Gastrocnemius medialis (tissue), 4 donors: ENCODE measurements at regions of chr3 and their contacts with region 1.

Region 1: GRCh38 chr3:172317984-172318383 is 130.3 kb downstream of the GHSR start:
- DNase-seq: peak in 1 of 2 donors; percentile 41
- ATAC-seq: peak; percentile 44 to 48
- H3K4me3 ChIP-seq: no peak overlapping the region
- H3K27ac ChIP-seq: peak overlapping the region; percentile 79 to 88 (median 82)
- H3K4me1 ChIP-seq: peaks cover 92 to 96% of the 10 kb centered on the region in 2 donors
- H3K27me3 ChIP-seq: no peaks in the 10 kb centered on the region
- CTCF ChIP-seq: no peak
- POLR2A ChIP-seq: no peak

Region 2: GRCh38 chr3:172171396-172172075 is 146.4 kb before region 1 on chr3:
- in situ Hi-C with region 1: no loop called
- intact Hi-C with region 1: loop called (anchors 5 kb)
- DNase-seq: no peak
- ATAC-seq: no peak
- H3K4me3 ChIP-seq: no peak overlapping the region
- H3K27ac ChIP-seq: peak overlapping the region in 1 of 4 donors; percentile 51
- H3K4me1 ChIP-seq: peaks cover 83 to 94% of the 10 kb centered on the region in 2 donors
- H3K27me3 ChIP-seq: no peaks in the 10 kb centered on the region
- CTCF ChIP-seq: no peak
- POLR2A ChIP-seq: no peak

Region 3: DNA sequence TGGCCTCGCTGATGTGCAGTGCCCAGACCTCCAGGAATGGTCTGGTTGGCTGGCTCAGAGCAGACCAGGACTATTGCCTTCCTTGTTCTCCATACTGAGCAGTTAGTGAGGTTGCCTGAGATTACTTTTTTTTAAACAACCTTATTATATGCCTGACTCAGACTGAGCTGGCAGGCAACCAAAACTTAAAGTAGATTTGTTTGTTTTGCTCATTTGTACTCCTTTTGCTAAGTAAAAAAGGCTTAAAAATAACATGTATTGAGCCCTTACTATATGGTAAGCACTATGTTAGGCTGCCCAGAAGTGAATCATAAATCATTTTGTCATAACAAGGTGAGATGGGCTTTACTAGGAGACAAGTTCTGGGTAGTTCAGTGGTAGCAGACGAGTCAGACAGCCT is 37.9 kb after region 1 on chr3:
- in situ Hi-C with region 1: no loop called
- intact Hi-C with region 1: loop called (anchors 5 kb)
- DNase-seq: no peak
- ATAC-seq: peak; percentile 45 to 67
- H3K4me3 ChIP-seq: no peak overlapping the region
- H3K27ac ChIP-seq: peak overlapping the region; percentile 1 to 23 (median 10)
- H3K4me1 ChIP-seq: peaks cover 38 to 52% of the 10 kb centered on the region in 2 donors
- H3K27me3 ChIP-seq: no peaks in the 10 kb centered on the region
- CTCF ChIP-seq: no peak
- POLR2A ChIP-seq: no peak